ENCODE measurements at regions of chr1 and their contacts with region 1.

Region 1: DNA sequence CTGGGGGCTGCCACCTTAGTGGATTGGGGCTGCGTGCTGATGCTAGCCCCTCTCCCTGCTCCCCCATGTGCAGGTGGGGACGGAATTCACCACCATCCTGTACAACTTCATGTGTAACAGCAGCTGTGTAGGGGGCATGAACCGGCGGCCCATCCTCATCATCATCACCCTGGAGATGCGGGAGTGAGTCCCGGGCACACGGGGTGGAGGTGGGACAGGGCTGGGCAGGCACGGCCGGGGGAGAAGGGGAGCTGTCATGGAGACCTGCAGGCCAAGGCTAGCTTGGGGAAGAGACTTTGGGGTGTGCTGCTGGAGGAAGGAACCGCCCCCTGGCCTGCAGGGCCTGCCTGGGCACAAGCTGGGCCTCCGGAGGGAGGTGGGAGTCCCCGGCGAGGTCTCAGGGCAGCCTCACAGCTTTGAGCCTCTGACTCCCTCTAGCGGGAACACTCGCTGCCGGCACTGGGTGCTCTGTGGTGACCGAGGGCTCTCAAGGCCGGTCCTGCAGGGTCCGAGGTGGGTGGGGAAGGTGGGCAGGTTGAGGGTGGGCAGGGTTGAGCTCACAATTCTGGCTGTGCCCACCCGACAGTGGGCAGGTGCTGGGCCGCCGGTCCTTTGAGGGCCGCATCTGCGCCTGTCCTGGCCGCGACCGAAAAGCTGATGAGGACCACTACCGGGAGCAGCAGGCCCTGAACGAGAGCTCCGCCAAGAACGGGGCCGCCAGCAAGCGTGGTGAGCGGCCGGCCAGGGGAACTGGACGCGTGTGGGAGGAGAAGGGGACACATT is 25.0 kb upstream of the CCDC27 start:
- DNase-seq: no peak

Region 2: GRCh38 chr1:3695326-3696217 is 31.7 kb before region 1 on chr1:
- intact Hi-C with region 1: loop called (anchors 1 kb)
- DNase-seq: peak; percentile 80

Measured in cardiac septum (tissue), 1 donor.